ENCODE measurements at regions of chr2 and their contacts with region 1.

Region 1: GRCh38 chr2:25362049-25362433 is 20.3 kb upstream of the DNMT3A start:
- DNase-seq: peak; percentile 87 to 99 (median 94)
- ATAC-seq: peak; percentile 94
- H3K4me3 ChIP-seq: peak overlapping the region; percentile 65 to 73
- H3K4me3 Mint-ChIP-seq: peak overlapping the region; percentile 89
- H3K27ac ChIP-seq: peak overlapping the region; percentile 49 to 84
- H3K27ac Mint-ChIP-seq: peak overlapping the region; percentile 94
- H3K4me1 ChIP-seq: peaks cover 15% of the 10 kb centered on the region
- H3K4me1 Mint-ChIP-seq: peaks cover 20% of the 10 kb centered on the region
- H3K27me3 ChIP-seq: no peaks in the 10 kb centered on the region
- H3K27me3 Mint-ChIP-seq: no peaks in the 10 kb centered on the region
- CTCF ChIP-seq: peak; percentile 94

Region 2: GRCh38 chr2:24806662-24807037 is 555.4 kb before region 1 on chr2:
- CTCF ChIA-PET with region 1: no interaction called
- POLR2A ChIA-PET with region 1: no interaction called
- intact Hi-C with region 1: no loop called
- DNase-seq: no peak
- ATAC-seq: no peak
- H3K4me3 ChIP-seq: no peak overlapping the region
- H3K4me3 Mint-ChIP-seq: no peak overlapping the region
- H3K27ac ChIP-seq: no peak overlapping the region
- H3K27ac Mint-ChIP-seq: peak overlapping the region; percentile 0
- H3K4me1 ChIP-seq: no peaks in the 10 kb centered on the region
- H3K4me1 Mint-ChIP-seq: peaks cover 8% of the 10 kb centered on the region
- H3K27me3 ChIP-seq: no peaks in the 10 kb centered on the region
- H3K27me3 Mint-ChIP-seq: no peaks in the 10 kb centered on the region
- CTCF ChIP-seq: no peak

Region 3: GRCh38 chr2:25294573-25295462 is 67.2 kb before region 1 on chr2:
- CTCF ChIA-PET with region 1: no interaction called
- POLR2A ChIA-PET with region 1: interaction called, 3 read pairs
- intact Hi-C with region 1: loop called in 1 of 2 experiments (anchors 2 kb)
- DNase-seq: peak; percentile 49 to 91 (median 85)
- ATAC-seq: peak; percentile 81
- H3K4me3 ChIP-seq: peak overlapping the region; percentile 18 to 46
- H3K4me3 Mint-ChIP-seq: peak overlapping the region; percentile 79
- H3K27ac ChIP-seq: peak overlapping the region; percentile 70 to 80
- H3K27ac Mint-ChIP-seq: peak overlapping the region; percentile 97
- H3K4me1 ChIP-seq: peaks cover 72% of the 10 kb centered on the region
- H3K4me1 Mint-ChIP-seq: peaks cover 59% of the 10 kb centered on the region
- H3K27me3 ChIP-seq: no peaks in the 10 kb centered on the region
- H3K27me3 Mint-ChIP-seq: no peaks in the 10 kb centered on the region
- CTCF ChIP-seq: no peak

Region 4: DNA sequence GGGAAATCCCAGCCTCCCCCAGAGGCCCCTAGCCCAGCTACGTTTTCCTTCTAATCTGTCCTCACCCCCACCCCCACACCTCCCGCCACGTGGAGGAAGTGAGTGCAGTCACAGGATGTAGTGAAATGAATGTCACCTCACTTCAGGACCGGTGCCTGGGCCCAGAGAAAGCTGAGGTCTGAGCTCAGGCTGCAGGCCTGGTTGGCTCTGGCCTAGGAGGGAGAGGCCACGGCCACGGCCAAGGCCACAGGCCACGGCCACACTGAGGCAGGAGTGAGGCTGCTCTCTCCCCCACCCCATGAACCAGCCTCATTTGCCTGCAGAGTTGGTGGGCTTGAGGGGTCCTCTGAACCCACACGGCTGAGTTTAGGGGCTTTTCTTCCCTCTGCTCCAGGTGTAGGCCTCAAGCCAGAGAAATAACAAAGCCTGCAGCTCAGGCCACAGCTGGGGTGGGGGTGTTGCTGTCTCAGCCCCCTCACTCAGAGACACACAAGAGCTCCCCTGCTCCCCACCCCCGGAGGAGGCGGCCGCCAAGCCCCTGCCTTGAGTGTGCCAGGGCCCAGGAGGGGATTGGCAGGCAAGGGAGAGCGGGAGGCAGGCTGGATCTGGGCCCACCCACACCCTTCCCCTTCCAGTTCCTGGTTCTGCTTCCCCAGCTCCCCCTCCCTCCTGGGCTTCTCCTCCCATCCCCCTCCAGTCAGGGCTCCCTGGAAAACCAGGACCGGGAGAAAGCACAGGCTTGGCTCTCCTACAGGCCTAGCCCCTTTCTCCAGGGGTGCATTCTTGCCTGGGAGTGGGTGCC is 47.3 kb before region 1 on chr2:
- CTCF ChIA-PET with region 1: interaction called, 11 read pairs
- POLR2A ChIA-PET with region 1: interaction called, 8 read pairs
- intact Hi-C with region 1: no loop called
- DNase-seq: peak; percentile 21 to 80 (median 69)
- ATAC-seq: peak; percentile 86
- H3K4me3 ChIP-seq: peak overlapping the region; percentile 34 to 46
- H3K4me3 Mint-ChIP-seq: peak overlapping the region; percentile 81
- H3K27ac ChIP-seq: peak overlapping the region; percentile 32 to 76
- H3K27ac Mint-ChIP-seq: peak overlapping the region; percentile 95
- H3K4me1 ChIP-seq: peaks cover 71% of the 10 kb centered on the region
- H3K4me1 Mint-ChIP-seq: peaks cover 66% of the 10 kb centered on the region
- H3K27me3 ChIP-seq: no peaks in the 10 kb centered on the region
- H3K27me3 Mint-ChIP-seq: no peaks in the 10 kb centered on the region
- CTCF ChIP-seq: no peak

Region 5: DNA sequence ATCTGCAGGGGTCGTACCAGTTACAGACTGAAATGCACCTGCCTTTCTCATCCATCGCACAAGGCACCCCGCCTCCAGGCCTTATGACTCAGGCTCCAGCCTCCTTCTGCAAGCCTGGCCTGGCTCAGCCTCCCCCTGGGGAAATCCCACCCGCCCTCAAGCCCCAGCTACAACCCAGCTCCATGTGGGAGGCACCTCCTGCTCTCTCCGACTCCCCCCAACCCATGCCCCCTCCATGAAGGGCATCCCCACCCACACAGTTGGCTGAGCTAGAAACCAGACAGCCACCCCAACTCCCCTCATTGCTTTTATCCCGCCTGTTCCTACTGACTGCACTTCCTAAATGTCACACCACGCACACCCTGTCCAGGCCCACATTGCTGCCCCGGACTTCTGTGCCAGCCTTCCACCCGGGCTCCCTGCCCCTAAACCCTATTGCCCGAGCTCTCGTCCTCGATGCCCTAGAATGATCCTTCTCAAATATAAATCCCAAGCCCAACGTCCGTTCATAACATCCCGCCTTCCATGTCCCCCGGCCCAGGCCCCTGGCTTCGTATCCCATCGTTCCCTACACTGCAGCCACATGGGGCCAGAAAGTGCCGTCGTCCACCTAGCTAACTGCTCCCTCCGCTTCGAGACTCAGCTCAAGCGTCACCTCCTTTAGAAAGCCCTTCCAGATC is 30.2 kb before region 1 on chr2:
- CTCF ChIA-PET with region 1: interaction called, 16 read pairs
- POLR2A ChIA-PET with region 1: interaction called, 7 read pairs
- intact Hi-C with region 1: no loop called
- DNase-seq: peak in 1 of 9 experiments; percentile 41
- ATAC-seq: no peak
- H3K4me3 ChIP-seq: no peak overlapping the region
- H3K4me3 Mint-ChIP-seq: no peak overlapping the region
- H3K27ac ChIP-seq: no peak overlapping the region
- H3K27ac Mint-ChIP-seq: peak overlapping the region; percentile 83
- H3K4me1 ChIP-seq: peaks cover 73% of the 10 kb centered on the region
- H3K4me1 Mint-ChIP-seq: peaks cover 68% of the 10 kb centered on the region
- H3K27me3 ChIP-seq: no peaks in the 10 kb centered on the region
- H3K27me3 Mint-ChIP-seq: no peaks in the 10 kb centered on the region
- CTCF ChIP-seq: no peak

Region 6: DNA sequence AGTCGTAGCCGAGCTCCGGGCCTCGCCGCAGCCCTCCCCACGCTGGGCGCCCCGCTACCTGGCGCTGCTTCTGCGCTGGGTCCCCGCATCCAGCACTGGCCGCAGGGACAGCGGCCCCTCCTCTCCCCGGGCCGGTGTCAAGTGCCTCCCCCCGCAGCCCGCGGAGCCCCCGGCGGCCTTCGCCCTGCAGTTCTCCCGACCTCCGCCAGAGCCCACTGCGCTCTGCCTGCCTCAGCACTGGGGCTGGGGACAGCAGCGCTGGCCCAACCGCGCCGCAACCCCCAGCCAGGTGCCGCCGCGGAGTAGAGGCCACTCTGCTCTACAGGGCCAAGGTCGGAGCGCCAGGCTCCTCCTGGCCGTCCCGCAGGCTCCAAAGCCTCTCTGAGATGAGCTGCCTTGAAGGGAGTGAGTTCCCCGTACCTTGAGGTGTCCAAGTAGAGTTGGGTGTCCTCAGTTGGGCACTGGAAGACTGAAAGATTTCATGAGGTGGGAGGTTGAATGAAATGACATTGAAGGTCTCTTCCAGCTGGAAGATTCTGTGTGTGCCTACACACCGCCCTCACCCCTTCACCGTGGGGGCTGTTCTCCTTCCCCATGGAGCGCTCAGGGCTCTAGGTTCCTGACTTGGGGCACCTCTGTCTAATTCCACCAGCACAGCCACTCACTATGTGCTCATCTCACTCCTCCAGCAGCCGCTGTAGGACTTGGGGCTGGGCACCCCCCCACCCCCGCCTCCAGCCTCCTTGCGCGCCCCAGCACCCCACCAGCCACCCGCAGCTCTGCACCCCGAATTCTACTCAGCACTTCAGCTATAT is 19.5 kb before region 1 on chr2:
- CTCF ChIA-PET with region 1: interaction called, 23 read pairs
- POLR2A ChIA-PET with region 1: interaction called, 18 read pairs
- intact Hi-C with region 1: loop called (anchors 1 kb)
- DNase-seq: peak; percentile 62 to 91 (median 80)
- ATAC-seq: peak; percentile 85
- H3K4me3 ChIP-seq: peak overlapping the region; percentile 22 to 53
- H3K4me3 Mint-ChIP-seq: peak overlapping the region; percentile 85
- H3K27ac ChIP-seq: no peak overlapping the region
- H3K27ac Mint-ChIP-seq: peak overlapping the region; percentile 77
- H3K4me1 ChIP-seq: peaks cover 42% of the 10 kb centered on the region
- H3K4me1 Mint-ChIP-seq: peaks cover 33% of the 10 kb centered on the region
- H3K27me3 ChIP-seq: no peaks in the 10 kb centered on the region
- H3K27me3 Mint-ChIP-seq: no peaks in the 10 kb centered on the region
- CTCF ChIP-seq: peak; percentile 87

Region 7: DNA sequence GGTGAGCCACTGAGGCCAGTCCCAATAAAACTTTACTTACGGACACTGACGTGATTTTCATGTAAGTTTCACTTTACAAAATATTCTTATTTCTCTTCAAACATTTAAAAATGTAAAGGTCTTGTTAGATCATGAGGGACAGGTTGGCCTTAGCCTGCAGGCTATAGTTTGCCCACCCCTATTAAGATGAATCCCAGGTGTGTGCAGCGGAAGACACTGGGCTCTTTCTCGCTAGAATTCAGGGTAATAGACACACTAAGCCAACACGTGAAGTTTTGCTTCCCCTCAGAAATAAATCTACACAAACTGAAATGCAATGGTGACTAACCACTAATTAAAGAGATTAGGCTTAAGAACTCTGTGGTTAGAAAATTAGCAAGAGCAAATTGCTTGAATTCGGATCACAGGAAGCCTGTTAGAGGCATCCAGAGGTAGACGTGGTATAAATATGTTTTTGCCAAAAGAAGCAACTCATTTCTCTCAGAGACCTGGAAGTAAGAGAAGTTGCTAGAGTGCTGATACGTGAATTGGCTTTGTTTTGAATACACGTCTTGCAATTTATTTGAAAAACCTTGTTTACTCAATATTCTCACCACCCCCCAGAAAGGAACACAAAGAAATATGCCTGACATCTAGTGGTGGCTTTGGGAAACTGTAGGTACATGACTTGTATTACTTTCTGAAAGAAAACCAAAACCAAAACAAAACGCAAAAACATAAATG is 159.8 kb after region 1 on chr2:
- CTCF ChIA-PET with region 1: interaction called, 7 read pairs
- POLR2A ChIA-PET with region 1: interaction called, 3 read pairs
- intact Hi-C with region 1: loop called (anchors 1 kb)
- DNase-seq: peak in 7 of 9 experiments; percentile 3 to 88 (median 25)
- ATAC-seq: peak; percentile 100
- H3K4me3 ChIP-seq: no peak overlapping the region
- H3K4me3 Mint-ChIP-seq: peak overlapping the region; percentile 30
- H3K27ac ChIP-seq: peak overlapping the region in 1 of 2 experiments; percentile 51
- H3K27ac Mint-ChIP-seq: peak overlapping the region; percentile 46
- H3K4me1 ChIP-seq: peaks cover 4% of the 10 kb centered on the region
- H3K4me1 Mint-ChIP-seq: peaks cover 7% of the 10 kb centered on the region
- H3K27me3 ChIP-seq: no peaks in the 10 kb centered on the region
- H3K27me3 Mint-ChIP-seq: no peaks in the 10 kb centered on the region
- CTCF ChIP-seq: peak; percentile 78